ENCODE measurements at regions of chr3 and their contacts with region 1.

Region 1: GRCh38 chr3:113287803-113288648 is 76.7 kb downstream of the BOC start:
- DNase-seq: peak; percentile 65
- CTCF ChIP-seq: peak; percentile 90

Region 2: GRCh38 chr3:112582244-112582874 is 705.7 kb before region 1 on chr3:
- CTCF ChIA-PET with region 1: interaction called, 12 read pairs
- POLR2A ChIA-PET with region 1: no interaction called
- DNase-seq: no peak
- CTCF ChIP-seq: peak; percentile 73

Region 3: DNA sequence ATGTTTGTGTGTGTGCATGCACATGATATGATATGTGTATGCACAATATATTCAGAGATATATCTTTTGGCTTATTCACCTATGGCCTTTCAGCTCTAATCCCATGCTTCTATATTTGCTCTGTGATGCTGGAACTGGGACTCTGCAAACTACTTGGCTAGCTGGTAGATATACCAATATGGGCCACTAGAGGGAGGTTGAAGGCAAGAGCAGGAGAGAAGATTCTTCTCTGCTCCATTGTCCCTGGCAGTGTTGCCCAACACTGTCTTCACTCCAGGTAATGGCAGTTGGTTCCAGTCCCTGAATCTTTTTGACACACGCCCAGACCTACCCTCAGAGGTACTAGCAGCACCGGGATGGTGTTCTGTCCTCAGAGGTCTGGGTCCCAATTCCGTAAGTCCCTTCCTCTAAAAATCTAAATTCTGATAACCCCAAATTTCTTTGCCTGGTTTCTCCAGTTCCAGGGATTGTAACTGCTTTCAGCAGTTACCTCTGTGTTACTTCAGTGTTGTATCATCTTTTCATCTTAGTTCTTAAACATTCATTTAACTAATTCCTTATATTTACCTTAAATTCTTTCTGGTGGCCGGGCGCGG is 252.5 kb before region 1 on chr3:
- CTCF ChIA-PET with region 1: interaction called, 44 read pairs
- POLR2A ChIA-PET with region 1: no interaction called
- DNase-seq: peak; percentile 68
- CTCF ChIP-seq: peak; percentile 79

Region 4: DNA sequence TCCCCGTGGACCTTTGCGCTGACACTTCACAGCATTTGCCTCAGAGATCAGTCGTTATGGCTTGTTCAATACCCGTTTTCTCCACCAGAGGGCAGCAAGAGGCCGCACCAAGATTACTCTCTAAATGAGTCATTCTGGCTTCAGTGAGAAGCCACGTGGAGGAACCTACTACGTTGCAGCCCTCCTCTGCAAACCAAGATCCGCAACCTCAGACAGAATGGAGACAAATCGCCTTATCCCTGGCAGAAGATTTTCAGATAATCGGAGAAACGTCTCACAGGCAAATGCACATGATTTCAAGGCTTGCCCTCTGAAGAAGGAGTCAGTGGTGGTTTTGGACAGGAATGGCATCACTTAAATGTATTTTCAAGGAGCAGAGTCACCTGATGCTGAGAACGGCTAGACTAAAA is 236.7 kb before region 1 on chr3:
- CTCF ChIA-PET with region 1: interaction called, 25 read pairs
- POLR2A ChIA-PET with region 1: no interaction called
- DNase-seq: peak; percentile 77
- CTCF ChIP-seq: peak; percentile 69

Region 5: DNA sequence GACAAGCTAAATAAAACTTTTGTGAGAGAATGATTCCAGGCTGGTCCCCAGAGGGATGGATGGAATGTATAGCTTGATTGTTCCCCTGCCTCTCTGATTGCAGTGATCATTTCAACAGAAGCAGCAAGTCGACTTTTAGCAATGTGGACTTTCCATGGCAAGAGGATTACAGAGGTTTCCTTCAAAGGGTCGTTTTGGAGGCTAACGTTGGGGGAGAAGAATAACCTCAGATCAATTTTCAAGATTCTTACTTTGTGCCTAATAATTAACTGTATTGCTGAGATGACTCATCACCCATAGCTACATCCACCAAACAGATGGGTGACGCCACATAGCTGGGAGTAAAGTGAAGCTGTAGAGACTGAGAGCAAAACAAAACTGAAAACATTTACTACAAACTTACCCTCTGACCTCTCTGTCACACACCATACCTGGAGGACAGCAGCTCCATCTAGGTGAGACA is 217.3 kb before region 1 on chr3:
- CTCF ChIA-PET with region 1: interaction called, 11 read pairs
- POLR2A ChIA-PET with region 1: no interaction called
- DNase-seq: peak; percentile 42
- CTCF ChIP-seq: no peak

Region 6: GRCh38 chr3:113086560-113087461 is 201.2 kb before region 1 on chr3:
- CTCF ChIA-PET with region 1: interaction called, 19 read pairs
- POLR2A ChIA-PET with region 1: no interaction called
- DNase-seq: no peak
- CTCF ChIP-seq: no peak

Region 7: DNA sequence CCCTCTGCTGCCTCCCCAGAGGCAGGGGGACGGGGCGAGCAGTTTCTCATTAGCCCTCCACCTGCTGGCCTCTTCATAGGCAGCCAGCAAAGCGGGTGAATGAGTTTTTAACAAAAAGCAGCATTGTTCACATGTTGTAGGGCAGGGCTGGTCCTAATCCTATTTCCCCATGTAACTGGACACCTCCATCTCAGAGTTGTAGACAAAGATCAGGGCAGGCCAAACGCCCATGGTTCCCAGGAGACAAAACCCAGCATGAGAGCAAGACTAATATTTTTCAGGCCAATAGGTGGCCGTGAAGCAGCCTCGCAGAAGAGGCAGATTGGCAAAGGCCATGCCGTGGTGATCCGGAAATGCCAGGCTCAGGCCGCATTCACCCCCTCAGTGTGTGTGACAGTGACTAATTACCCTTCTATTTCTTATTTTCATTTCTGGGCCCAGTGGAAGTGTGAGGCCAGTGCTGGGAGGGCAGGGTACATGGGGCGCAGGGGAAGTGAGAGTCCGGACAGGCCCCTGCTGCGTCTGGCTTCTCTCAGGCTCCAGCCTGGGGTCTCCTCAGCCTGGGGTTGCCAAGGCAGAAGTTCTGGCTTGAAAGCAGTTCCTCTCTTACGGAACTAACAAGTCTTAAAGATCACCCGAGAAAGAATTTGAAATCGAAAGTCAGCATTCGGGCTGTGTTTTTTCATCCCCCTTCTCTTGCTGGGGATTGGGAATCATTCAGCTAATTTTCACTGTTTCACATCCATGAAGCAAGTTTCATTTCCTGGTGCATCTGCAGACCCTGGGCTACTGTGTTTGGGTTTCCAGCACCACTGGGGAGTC is 11.9 kb before region 1 on chr3:
- CTCF ChIA-PET with region 1: interaction called, 52 read pairs
- POLR2A ChIA-PET with region 1: no interaction called
- DNase-seq: peak; percentile 58
- CTCF ChIP-seq: no peak

Region 8: DNA sequence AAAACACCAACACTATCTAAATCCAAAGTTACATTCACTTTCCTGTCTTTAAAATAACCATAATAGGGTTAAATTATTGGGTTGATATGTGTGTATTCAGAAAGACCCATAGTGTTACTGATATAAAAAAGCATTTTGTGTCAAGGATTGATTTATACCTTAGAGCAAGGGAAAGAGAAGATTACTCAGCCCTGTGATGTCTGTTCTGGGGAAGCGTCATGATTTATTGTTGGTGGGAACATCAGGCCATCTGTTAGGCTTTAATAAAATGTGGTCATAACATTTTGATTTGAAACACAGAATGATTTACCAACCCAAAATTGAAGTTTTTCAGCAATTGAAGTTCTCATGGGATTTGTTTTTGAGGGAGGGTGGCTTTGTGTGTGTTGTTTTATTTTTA is 277.5 kb after region 1 on chr3:
- CTCF ChIA-PET with region 1: no interaction called
- POLR2A ChIA-PET with region 1: no interaction called
- DNase-seq: no peak
- CTCF ChIP-seq: no peak

Measured in GM10248 (cell line).